Lower leg skin (tissue), 4 donors: ENCODE measurements at regions of chrX and their contacts with region 1.

Region 1: DNA sequence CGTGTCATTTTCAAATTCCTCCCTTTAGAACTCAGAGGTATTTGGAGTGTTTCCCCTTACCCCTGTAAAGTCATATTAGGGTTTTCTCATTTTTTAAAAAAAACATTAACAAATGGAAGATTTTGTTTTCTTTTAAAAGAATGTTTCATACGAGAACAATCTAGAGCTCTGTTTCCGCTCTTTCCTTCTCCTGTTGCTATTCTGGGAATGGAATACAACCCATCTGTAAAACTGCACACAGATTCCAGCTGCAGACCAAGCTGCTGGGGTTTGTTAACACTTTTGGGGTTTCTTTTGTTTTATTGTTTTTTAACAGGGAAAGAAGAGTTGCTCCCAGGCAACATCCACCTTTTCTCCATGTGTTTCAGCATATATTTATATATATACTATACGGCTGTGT is 61.3 kb downstream of the HCCS start:
- DNase-seq: no peak
- H3K4me3 ChIP-seq: no peak overlapping the region
- CTCF ChIP-seq: no peak
- POLR2A ChIP-seq: no peak

Region 2: GRCh38 chrX:10972706-10973105 is 199.7 kb before region 1 on chrX:
- intact Hi-C with region 1: loop called (anchors 5 kb)
- DNase-seq: no peak
- H3K4me3 ChIP-seq: no peak overlapping the region
- CTCF ChIP-seq: no peak
- POLR2A ChIP-seq: no peak